ENCODE measurements at regions of chr11 and their contacts with region 1.

Region 1: GRCh38 chr11:62678770-62679696 is at the start of gene UBXN1:
- DNase-seq: peak; percentile 89
- H3K4me3 Mint-ChIP-seq: peak within 1 kb of the TSS; percentile 90
- H3K27ac Mint-ChIP-seq: peak within 1 kb of the TSS; percentile 92
- H3K4me1 Mint-ChIP-seq: peaks cover 42% of the 10 kb centered on the region
- H3K27me3 Mint-ChIP-seq: no peaks in the 10 kb centered on the region
- total RNA-seq, gene UBXN1: 126 to 146 TPM

Region 2: DNA sequence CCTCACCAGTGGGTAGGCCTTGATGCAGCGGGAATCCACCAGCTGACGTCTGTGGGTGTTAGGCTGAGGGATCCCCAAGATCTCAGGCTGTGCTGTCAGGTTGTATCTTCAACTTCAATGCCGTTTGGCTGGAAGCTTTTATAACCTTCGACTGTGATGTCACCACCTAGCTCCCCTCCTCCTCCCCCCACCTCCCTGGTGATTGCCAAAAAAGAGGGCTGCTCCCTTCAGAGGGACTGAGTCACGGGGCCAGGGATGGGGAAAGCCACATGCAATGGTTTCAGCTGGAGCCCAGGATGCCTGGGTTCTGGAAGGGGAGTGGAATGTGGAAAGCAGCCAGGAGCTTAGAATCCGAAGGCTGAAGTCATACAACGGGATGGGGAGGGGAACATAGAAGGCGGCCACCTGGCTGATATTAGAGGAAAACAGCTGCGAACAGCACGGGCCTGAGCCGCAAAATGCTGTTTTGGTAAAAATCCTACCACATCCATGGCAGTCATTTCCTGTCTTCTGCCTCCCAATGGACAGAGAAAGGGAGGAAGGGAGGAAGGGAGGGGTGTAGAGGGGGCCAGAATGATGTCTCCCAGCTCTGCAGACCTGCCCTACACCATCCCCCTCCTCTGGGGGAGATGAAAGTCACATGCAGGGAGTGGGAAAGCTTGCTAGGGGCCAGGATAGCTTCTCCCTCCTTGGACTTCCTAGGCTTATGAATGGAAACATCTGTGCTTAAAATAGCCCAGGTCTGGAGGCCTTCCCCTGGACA is 10.6 kb after region 1 on chr11 and contains the start of gene LRRN4CL:
- CTCF ChIA-PET with region 1: interaction called, 12 read pairs
- POLR2A ChIA-PET with region 1: interaction called, 8 read pairs
- DNase-seq: no peak
- H3K4me3 Mint-ChIP-seq: no peak within 1 kb of the TSS
- H3K27ac Mint-ChIP-seq: no peak within 1 kb of the TSS
- H3K4me1 Mint-ChIP-seq: peaks cover under 1% of the 10 kb centered on the region
- H3K27me3 Mint-ChIP-seq: peaks cover 10% of the 10 kb centered on the region
- total RNA-seq, gene LRRN4CL: 0.17 to 0.40 TPM

Region 3: GRCh38 chr11:62713343-62713742 is 34.3 kb after region 1 on chr11:
- CTCF ChIA-PET with region 1: no interaction called
- POLR2A ChIA-PET with region 1: no interaction called
- DNase-seq: no peak
- H3K4me3 Mint-ChIP-seq: no peak overlapping the region
- H3K27ac Mint-ChIP-seq: peak overlapping the region; percentile 93
- H3K4me1 Mint-ChIP-seq: peaks cover 77% of the 10 kb centered on the region
- H3K27me3 Mint-ChIP-seq: no peaks in the 10 kb centered on the region